ENCODE measurements at regions of chr21 and their contacts with region 1.

Region 1: GRCh38 chr21:31088315-31088714 is 50.0 kb upstream of the KRTAP19-8 start:
- DNase-seq: no peak
- H3K4me3 Mint-ChIP-seq: no peak overlapping the region
- H3K27ac Mint-ChIP-seq: no peak overlapping the region
- H3K4me1 Mint-ChIP-seq: peaks cover 19% of the 10 kb centered on the region
- H3K27me3 Mint-ChIP-seq: peaks cover 8% of the 10 kb centered on the region

Region 2: DNA sequence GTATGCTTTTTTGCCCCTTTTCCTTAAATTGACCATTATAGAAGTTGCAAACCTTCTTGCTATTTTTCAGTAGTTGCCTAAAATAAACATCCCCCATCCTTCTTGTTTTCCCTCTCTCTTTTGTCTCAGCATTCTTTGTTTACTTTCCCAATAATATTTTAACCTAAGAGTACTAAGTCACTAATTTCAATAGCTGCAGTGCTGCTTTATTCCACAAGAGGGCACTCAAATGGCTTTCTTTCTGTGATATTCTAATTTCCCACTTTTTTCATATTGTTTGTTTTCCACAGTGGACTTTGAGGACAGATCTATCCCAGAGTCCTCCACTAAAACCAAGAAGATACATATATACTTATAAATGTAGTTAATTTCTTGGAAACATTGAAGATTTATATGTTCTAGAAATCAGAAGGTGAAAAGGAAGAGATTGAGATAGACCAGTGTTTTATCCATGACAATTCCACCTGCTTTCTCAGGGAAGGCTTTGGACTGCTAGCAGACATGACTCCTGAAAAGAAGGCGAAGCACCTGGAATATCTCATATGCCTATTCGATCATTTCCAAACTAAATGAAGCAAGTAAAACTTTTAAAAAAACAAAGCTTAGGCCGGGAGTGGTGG is 1043.8 kb before region 1 on chr21:
- intact Hi-C with region 1: loop called (anchors 1 kb)
- DNase-seq: no peak
- H3K4me3 Mint-ChIP-seq: no peak overlapping the region
- H3K27ac Mint-ChIP-seq: no peak overlapping the region
- H3K4me1 Mint-ChIP-seq: no peaks in the 10 kb centered on the region
- H3K27me3 Mint-ChIP-seq: no peaks in the 10 kb centered on the region

Region 3: DNA sequence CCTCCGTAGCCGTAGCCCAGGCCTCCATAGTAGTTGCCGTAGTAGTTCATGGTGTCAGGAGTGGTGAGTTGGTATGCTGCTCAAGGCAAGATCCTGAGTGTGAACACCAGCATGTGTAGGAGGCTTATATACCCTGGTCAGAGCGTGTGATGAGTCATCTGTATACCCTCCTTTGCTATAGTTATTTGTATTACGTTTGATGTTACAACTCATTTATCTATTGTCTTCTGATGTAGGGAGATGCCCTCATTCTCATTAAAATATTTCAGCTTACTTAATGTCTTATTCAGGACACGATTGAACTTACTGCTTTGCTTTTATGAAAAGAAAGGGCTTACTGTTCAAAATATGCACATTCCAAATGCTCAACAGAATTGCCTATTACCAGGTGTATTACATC is 586.3 kb before region 1 on chr21 and contains the start of gene KRTAP19-5:
- intact Hi-C with region 1: loop called (anchors 1 kb)
- DNase-seq: no peak
- H3K4me3 Mint-ChIP-seq: no peak within 1 kb of the TSS
- H3K27ac Mint-ChIP-seq: no peak within 1 kb of the TSS
- H3K4me1 Mint-ChIP-seq: no peaks in the 10 kb centered on the region
- H3K27me3 Mint-ChIP-seq: no peaks in the 10 kb centered on the region
- total RNA-seq, gene KRTAP19-5: not detected in 2 replicates

Region 4: DNA sequence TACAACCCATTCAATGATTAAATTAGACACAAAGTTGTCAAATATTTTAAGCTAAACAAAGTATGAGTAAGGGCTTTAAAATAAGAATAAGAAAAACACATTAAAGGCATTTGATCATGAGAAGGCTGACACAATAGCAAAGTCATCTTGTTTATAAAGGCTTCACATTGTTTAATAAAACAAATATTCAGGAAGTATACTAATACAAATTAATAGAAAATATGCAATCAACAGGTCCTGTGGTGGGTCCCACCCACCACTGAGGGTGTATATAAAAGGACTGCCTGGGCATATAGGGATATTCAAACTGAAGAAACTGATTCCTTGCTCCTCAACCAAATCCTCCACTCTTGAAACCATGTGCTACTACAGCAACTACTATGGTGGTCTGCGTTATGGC is 453.4 kb before region 1 on chr21 and contains the start of gene KRTAP20-2:
- intact Hi-C with region 1: no loop called
- DNase-seq: no peak
- H3K4me3 Mint-ChIP-seq: no peak within 1 kb of the TSS
- H3K27ac Mint-ChIP-seq: no peak within 1 kb of the TSS
- H3K4me1 Mint-ChIP-seq: no peaks in the 10 kb centered on the region
- H3K27me3 Mint-ChIP-seq: no peaks in the 10 kb centered on the region
- total RNA-seq, gene KRTAP20-2: not detected in 2 replicates

Region 5: GRCh38 chr21:30718239-30718909 is 369.9 kb before region 1 on chr21 and contains the start of gene KRTAP21-3:
- intact Hi-C with region 1: loop called (anchors 5 kb)
- DNase-seq: no peak
- H3K4me3 Mint-ChIP-seq: peak within 1 kb of the TSS; percentile 7
- H3K27ac Mint-ChIP-seq: peak within 1 kb of the TSS; percentile 75
- H3K4me1 Mint-ChIP-seq: peaks cover 29% of the 10 kb centered on the region
- H3K27me3 Mint-ChIP-seq: peaks cover 2% of the 10 kb centered on the region
- total RNA-seq, gene KRTAP21-3: not detected in 2 replicates

Region 6: DNA sequence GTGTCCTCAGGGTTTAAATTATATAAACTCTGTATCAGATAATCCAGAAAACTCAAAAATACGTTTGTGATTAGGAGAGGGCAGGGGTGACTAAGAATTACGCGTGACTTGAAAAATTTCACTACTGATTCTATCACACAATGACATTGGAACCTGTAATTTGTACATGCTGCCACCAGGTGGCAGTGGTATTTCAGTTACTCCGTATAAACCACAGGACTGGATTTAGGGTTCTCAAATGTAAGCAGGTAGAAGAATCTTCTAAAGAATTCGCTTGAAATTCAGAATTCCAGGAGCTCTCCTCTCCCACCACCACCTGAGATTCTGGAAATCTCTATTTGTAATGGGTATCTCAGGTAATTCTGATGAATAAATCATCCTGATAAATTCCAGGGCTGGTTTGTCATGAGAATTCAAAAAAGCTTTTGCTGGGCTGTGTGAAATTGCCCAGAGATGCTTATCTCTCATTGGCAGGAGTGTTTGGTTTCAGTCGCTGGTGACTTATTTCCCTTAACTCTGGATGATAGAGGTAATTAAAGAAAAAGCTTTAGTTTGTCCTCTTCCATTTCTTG is 257.0 kb before region 1 on chr21:
- intact Hi-C with region 1: loop called (anchors 1 kb)
- DNase-seq: peak; percentile 7
- H3K4me3 Mint-ChIP-seq: no peak overlapping the region
- H3K27ac Mint-ChIP-seq: no peak overlapping the region
- H3K4me1 Mint-ChIP-seq: no peaks in the 10 kb centered on the region
- H3K27me3 Mint-ChIP-seq: no peaks in the 10 kb centered on the region

Region 7: DNA sequence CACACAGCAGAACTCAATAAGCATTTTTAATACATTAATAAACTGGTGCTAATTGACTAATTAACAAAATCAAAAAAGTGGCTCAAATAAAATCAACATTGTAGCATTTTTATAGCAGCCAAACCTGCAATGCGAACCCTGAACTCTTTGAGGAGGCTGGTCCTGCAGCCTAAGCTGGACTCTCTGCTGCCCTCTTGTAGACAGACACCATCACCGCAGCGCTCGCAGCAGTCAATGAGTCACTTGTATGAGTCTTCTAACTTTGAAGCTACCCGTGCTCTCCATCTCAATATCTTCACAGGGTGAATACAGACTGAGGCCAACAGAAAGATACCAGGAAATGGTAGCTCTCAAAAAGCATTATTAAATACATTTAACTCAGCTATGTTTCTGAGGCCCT is 249.0 kb before region 1 on chr21:
- intact Hi-C with region 1: loop called (anchors 1 kb)
- DNase-seq: no peak
- H3K4me3 Mint-ChIP-seq: no peak overlapping the region
- H3K27ac Mint-ChIP-seq: no peak overlapping the region
- H3K4me1 Mint-ChIP-seq: no peaks in the 10 kb centered on the region
- H3K27me3 Mint-ChIP-seq: peaks cover 3% of the 10 kb centered on the region

Region 8: DNA sequence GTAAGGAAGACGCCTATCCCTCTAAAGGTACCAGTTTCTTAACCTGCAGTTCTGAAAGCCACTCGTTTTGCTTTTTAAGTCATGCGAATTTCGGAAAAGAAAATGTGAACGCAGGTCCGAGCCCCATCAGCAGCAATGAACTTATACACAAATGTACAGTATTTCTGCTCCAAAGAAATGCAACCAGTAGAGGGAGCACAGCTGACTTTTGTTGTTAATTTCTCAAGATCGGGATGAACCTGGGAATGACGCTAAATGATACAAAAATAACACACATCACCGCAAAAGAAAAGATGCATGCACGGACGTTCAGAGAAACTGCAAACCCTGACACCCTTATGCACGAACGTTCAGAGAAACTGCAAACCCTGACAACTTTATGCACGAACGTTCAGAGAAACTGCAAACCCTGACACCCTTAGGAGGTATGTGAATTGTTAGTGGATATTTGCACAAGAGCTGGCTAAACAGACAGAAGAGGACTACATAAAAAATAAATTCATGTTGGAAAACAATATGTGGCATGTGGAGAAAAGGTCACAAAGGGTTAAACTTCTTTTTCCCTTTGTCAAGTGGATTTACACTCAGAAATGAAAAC is 259.2 kb after region 1 on chr21:
- intact Hi-C with region 1: no loop called
- DNase-seq: no peak
- H3K4me3 Mint-ChIP-seq: no peak overlapping the region
- H3K27ac Mint-ChIP-seq: no peak overlapping the region
- H3K4me1 Mint-ChIP-seq: peaks cover 56% of the 10 kb centered on the region
- H3K27me3 Mint-ChIP-seq: peaks cover 4% of the 10 kb centered on the region